ENCODE measurements at regions of chr3 and their contacts with region 1.

Region 1: GRCh38 chr3:167882067-167882667 is 146.6 kb downstream of the SERPINI1 start:
- DNase-seq: no peak
- ATAC-seq: peak in 1 of 2 donors; percentile 41

Region 2: GRCh38 chr3:167406875-167407492 is 475.2 kb before region 1 on chr3:
- intact Hi-C with region 1: loop called in 1 of 2 experiments (anchors 5 kb)
- DNase-seq: peak; percentile 25
- ATAC-seq: peak; percentile 81 to 90

Region 3: DNA sequence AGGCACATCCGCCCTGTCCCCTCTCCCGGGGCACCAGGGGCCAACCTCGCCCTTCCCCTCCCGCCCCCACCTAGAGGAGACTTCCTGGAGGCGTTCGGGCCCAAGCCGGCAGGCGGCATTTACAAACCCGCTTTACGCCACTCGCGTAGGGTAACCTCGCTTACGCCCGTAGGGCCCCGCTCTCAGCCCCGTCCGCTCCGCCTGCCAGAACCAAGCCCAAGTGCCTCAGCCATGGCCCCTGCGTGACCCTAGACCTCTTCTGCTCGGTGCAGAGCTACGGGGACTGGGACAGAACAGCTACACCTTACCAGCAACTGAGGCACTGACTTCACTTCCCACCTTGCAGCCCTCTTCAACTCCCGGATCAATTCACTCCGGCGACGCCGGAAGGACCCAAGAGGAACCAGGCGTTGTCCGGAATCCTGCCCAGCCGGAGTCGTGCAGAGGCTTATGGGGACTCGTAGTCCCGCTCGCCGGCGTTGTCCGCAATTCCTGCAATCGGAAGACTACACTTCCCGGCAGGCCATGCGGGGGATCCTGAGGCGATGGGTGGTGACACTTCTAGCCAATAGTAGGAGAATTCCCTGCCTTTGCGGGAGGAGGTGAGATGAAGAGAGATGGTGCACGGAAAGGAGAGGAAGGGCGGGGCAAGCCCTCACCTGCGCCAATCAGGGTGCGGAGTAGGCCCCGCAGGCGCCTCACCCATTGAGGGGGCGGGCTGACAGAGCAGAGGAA is 147.5 kb before region 1 on chr3 and contains the start of gene PDCD10:
- intact Hi-C with region 1: loop called in 1 of 2 experiments (anchors 10 kb)
- DNase-seq: peak; percentile 99
- ATAC-seq: peak; percentile 97
- total RNA-seq, gene PDCD10: 27.5 to 39.0 TPM

Region 4: DNA sequence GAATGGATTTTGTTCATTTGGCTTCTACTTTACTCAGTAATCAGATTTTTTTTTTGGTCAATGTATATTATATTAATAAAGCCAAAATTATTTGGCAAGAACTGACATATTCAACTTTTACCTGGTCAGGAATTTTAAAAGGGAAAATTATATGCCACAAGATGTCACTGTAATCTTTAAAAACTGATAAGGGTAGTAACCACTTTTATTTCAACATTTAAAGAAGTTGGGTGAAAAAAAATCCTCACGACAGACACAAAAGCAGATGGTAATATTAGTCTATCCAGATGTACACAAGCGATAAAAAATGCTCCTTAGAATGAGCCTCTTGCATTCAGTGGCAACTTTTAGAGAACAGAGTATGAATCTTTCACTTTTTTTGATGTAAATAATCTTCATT is 44.7 kb before region 1 on chr3:
- intact Hi-C with region 1: loop called (anchors 2 to 5 kb)
- DNase-seq: no peak
- ATAC-seq: no peak

Region 5: GRCh38 chr3:168040607-168041208 is 158.5 kb after region 1 on chr3:
- intact Hi-C with region 1: loop called in 1 of 2 experiments (anchors 5 kb)
- DNase-seq: no peak
- ATAC-seq: peak; percentile 62 to 74